Posterior vena cava (tissue), 2 donors: ENCODE measurements at regions of chr12 and their contacts with region 1.

Region 1: GRCh38 chr12:25811656-25812126 is 146.8 kb upstream of the RASSF8 start:
- DNase-seq: no peak

Region 2: DNA sequence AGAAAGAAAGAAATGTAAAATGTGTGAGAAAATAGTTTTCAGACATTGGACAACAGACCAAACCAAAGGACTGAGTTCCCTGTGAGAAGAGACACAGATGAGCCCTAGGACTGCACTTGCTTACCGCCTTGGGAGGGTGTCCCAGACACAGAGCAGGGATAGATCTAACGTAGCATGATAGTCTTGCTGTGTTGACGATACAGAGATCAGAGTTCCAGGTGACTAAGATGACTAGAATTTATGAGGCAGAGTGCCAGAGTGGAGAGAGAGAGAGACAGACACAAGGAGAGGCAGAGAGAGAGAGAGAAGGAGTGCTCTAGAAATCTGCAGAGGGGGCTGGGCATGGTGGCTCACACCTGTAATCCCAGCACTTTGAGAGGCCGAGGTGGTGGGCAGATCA is 110.4 kb before region 1 on chr12:
- intact Hi-C with region 1: loop called in 1 of 2 experiments (anchors 10 kb)
- DNase-seq: no peak

Region 3: GRCh38 chr12:26298785-26299621 is 487.3 kb after region 1 on chr12:
- intact Hi-C with region 1: no loop called
- DNase-seq: no peak